ENCODE measurements at regions of chr3 and their contacts with region 1.

Region 1: GRCh38 chr3:32296256-32297204 is 58.0 kb downstream of the CMTM8 start:
- DNase-seq: peak; percentile 74
- CTCF ChIP-seq: peak; percentile 87

Region 2: DNA sequence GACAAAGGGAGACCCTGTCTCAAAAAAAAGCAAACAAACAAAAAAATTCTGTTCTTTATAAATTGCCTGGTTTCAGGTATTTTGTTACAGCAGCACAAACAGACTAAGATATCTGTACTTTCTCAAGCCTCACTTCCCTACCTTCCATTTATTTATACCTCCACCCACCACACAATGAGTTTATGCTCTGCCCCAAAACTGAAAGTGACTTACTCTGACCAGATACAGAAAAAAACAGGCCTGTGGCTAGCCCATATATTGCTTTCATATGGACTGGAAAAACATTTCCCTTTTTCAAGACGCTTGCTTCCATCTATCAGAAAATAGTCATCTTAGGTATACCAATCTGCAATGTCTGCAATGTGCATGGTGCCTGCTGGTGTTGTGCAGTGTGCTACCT is 198.8 kb before region 1 on chr3:
- CTCF ChIA-PET with region 1: no interaction called
- POLR2A ChIA-PET with region 1: no interaction called
- DNase-seq: no peak
- CTCF ChIP-seq: no peak

Region 3: GRCh38 chr3:32285891-32286290 is 10.6 kb before region 1 on chr3:
- CTCF ChIA-PET with region 1: interaction called, 28 read pairs
- POLR2A ChIA-PET with region 1: no interaction called
- DNase-seq: no peak
- CTCF ChIP-seq: no peak

Region 4: DNA sequence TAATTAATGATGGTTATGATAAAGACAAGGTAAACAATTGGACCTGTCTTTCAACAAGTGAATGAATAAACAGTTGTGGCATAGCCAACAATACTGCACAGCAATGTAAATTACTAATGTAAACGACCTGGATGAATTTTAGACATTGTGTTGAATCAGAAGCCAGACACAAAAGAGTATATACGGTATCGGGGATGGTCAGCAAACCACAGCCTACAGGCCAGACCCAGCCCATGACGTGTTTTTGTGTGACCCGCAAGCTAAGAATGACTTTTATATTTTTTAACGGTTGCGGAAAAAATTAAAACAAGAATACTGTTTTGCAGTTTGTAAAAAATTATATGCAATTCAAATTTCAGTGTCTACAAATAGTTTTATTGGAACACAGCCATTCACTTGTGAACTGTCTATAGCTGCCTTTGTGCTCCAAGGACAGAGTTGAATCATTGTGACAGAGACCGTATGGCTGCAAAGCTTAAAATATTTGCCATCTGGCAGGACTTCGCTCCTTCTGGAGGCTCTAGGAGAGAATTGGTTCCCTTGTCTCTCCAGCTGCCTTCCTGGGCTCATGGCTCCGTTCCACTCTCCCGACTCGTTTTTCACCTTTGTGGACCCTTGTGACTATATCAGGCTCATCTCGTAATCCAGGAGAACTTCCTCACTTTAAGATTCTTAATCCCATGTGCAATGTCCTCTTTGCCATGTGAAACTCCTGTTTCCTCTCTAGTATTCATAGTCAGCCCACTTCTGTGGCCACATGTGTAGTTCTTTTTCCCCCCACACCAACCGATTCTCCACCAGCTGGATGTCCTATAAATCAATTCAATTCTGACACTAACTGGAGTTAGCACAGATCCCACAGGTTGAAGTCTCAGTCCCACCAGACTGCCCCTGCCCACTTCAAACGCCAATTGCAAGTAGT is 14.6 kb after region 1 on chr3:
- CTCF ChIA-PET with region 1: interaction called, 12 read pairs
- POLR2A ChIA-PET with region 1: interaction called, 5 read pairs
- DNase-seq: no peak
- CTCF ChIP-seq: no peak

Region 5: DNA sequence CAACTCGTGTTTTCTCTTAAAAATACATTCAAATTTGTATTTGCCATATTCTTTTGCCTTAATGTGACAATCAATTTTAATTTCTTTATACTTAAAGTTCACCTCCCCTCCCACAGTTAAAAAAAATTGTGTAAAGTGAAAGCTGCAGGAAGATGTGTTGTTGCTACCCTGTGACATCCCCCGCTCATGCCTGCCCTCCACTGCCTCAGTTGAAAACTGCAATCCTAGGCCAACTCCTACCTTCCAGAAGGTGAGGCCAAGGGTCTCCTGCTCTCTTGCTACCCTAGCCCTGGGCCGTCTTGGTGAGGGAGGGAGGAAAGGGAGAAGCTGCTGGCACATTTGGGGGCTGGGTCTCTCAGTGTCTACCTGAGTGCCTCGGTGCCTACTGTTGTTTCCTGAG is 38.1 kb after region 1 on chr3:
- CTCF ChIA-PET with region 1: interaction called, 17 read pairs
- POLR2A ChIA-PET with region 1: no interaction called
- DNase-seq: peak; percentile 52
- CTCF ChIP-seq: peak; percentile 48

Measured in GM10248 (cell line).